ENCODE measurements at regions of chr15 and their contacts with region 1.

Region 1: GRCh38 chr15:81274931-81275707 is 48.8 kb downstream of the STARD5 start:
- DNase-seq: peak; percentile 88 to 92
- ATAC-seq: peak; percentile 91
- H3K4me3 ChIP-seq: no peak overlapping the region
- H3K27ac ChIP-seq: no peak overlapping the region
- H3K4me1 ChIP-seq: no peaks in the 10 kb centered on the region
- H3K27me3 ChIP-seq: no peaks in the 10 kb centered on the region

Region 2: DNA sequence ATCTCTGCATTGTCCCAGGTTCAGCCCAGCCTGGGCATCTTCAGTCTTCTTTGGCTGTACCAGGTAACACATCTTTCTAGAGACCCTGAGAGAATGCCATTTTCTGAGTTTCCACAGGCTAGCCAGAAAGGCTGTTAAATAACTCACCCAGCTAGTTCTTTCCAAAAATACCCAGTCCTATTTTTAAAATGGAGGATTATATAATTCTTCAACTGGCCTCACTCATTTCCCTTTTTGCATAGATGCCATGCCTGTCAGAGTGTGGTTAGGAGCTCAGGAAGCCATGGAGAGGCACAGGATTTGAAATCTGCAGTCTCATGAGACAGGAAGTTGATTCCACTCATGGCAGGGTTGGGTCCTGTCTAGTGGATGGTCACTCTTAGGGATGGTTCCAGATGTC is 456.1 kb before region 1 on chr15:
- intact Hi-C with region 1: no loop called
- DNase-seq: no peak
- ATAC-seq: no peak
- H3K4me3 ChIP-seq: no peak overlapping the region
- H3K27ac ChIP-seq: peak overlapping the region; percentile 52 to 55
- H3K4me1 ChIP-seq: peaks cover 3 to 7% of the 10 kb centered on the region in 2 donors
- H3K27me3 ChIP-seq: no peaks in the 10 kb centered on the region

Region 3: GRCh38 chr15:80970018-80970658 is 305.0 kb before region 1 on chr15:
- intact Hi-C with region 1: no loop called
- DNase-seq: no peak
- ATAC-seq: peak; percentile 85
- H3K4me3 ChIP-seq: no peak overlapping the region
- H3K27ac ChIP-seq: no peak overlapping the region
- H3K4me1 ChIP-seq: no peaks in the 10 kb centered on the region
- H3K27me3 ChIP-seq: no peaks in the 10 kb centered on the region

Region 4: DNA sequence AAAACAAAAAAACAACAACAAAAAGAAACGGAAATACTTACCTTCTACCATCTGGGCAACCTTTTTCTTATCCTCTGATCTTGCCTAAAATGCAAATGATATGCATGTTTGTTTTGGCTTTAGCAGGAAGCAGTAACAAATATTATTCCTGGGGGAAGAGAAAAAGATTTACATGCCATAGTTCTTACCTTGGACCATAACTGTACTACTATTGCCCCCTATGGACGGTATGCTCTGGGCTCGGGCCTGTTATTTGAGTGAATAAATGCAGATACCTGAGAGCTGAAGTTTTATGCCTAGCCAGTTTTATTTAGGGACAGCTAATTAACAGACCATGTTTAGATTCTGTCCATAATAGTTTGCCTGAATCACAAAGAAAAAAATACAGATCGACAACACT is 61.4 kb after region 1 on chr15:
- intact Hi-C with region 1: loop called in 1 of 2 experiments (anchors 5 kb)
- DNase-seq: no peak
- ATAC-seq: no peak
- H3K4me3 ChIP-seq: no peak overlapping the region
- H3K27ac ChIP-seq: no peak overlapping the region
- H3K4me1 ChIP-seq: peaks cover 0 to 4% of the 10 kb centered on the region in 2 donors
- H3K27me3 ChIP-seq: no peaks in the 10 kb centered on the region

Region 5: GRCh38 chr15:81400640-81401236 is 125.6 kb after region 1 on chr15:
- intact Hi-C with region 1: loop called (anchors 2 kb)
- DNase-seq: no peak
- ATAC-seq: no peak
- H3K4me3 ChIP-seq: no peak overlapping the region
- H3K27ac ChIP-seq: no peak overlapping the region
- H3K4me1 ChIP-seq: no peaks in the 10 kb centered on the region
- H3K27me3 ChIP-seq: no peaks in the 10 kb centered on the region